Heart right ventricle (tissue), 16 donors: ENCODE measurements at regions of chr15 and their contacts with region 1.

Region 1: DNA sequence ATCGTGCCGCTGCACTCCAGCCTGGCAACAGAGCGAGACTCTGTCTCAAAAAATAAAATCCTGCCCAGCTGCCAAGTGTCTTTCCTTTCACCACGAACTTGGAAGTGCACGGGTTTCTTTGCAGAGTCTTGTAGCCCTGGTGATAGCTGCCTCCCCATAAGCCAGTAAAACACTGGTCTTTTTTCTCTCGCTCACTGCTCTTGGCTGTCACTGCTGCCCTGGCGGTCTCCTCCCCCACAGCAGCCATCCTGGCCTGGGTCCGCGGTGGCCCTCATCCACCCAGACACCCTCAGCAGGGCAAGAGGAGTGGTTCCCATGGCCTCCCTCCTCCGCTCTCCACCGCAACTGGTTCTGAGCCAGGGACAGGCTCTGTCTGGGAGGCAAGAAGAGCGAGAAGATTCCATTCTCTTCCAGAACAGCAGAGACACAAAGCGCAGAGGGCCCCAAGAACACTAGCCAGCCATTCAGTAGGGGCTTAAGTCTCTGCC is 44.4 kb downstream of the KLHL25 start:
- DNase-seq: peak; percentile 68 to 80
- ATAC-seq: peak; percentile 59 to 81 (median 69)
- H3K4me3 ChIP-seq: peak overlapping the region in 5 of 10 donors; percentile 8 to 27 (median 26)
- H3K27ac ChIP-seq: peak overlapping the region; percentile 41 to 86 (median 72)
- H3K4me1 ChIP-seq: peaks cover 19 to 81% (median 56%) of the 10 kb centered on the region in 9 donors
- H3K27me3 ChIP-seq: no peaks in the 10 kb centered on the region
- CTCF ChIP-seq: no peak

Region 2: GRCh38 chr15:84980196-84981053 is 769.9 kb before region 1 on chr15:
- intact Hi-C with region 1: no loop called
- DNase-seq: peak; percentile 83 to 87
- ATAC-seq: peak; percentile 71 to 90 (median 81)
- H3K4me3 ChIP-seq: peak overlapping the region; percentile 62 to 96 (median 85)
- H3K27ac ChIP-seq: peak overlapping the region; percentile 91 to 98 (median 96)
- H3K4me1 ChIP-seq: peaks cover 6 to 54% (median 39%) of the 10 kb centered on the region in 9 donors
- H3K27me3 ChIP-seq: no peaks in the 10 kb centered on the region
- CTCF ChIP-seq: peak in 2 of 9 donors; percentile 8 to 20

Region 3: GRCh38 chr15:85607842-85608241 is 142.5 kb before region 1 on chr15:
- intact Hi-C with region 1: loop called in 1 of 10 experiments (anchors 5 kb)
- DNase-seq: peak in 1 of 2 donors; percentile 65
- ATAC-seq: peak in 7 of 8 donors; percentile 53 to 89 (median 88)
- H3K4me3 ChIP-seq: no peak overlapping the region
- H3K27ac ChIP-seq: peak overlapping the region in 9 of 10 donors; percentile 41 to 87 (median 67)
- H3K4me1 ChIP-seq: peaks cover 9 to 77% (median 56%) of the 10 kb centered on the region in 9 donors
- H3K27me3 ChIP-seq: no peaks in the 10 kb centered on the region
- CTCF ChIP-seq: no peak

Region 4: DNA sequence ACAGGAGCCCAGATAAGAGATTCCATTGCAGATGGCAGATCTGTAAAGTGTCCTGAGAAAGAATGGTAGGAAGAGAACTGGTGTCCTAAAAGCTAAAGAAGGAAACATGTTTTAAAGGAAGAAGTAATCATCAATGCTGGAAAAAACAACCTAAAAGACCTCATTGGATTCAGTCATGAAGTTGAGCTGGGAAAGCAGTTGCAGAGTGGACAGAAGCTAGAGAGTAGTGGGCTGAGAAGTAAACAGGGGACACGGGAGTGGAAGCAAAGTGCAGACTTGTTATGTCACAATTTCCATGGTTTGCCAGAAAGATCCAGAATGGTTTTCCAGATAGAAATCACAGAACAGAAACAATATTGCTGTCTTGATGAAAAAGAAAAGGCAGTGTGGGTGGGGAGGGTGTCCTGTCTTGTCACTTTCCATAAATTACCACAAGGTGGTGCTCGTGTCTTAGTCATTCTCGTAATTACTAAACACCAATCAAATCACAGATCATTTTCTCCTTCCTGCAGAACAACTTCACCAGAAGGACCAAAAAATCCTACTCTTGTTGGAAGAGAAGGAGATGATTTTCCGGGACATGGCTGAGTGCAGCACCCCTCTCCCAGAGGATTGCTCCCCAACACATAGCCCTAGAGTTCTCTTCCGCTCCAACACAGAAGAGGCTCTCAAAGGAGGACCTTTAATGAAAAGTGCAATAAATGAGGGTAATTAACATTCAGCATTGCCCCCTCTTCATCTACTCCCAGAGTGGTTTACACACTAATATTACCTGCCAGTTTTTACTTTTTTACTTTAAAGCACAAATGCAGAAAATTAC is 20.2 kb before region 1 on chr15:
- intact Hi-C with region 1: loop called in 2 of 10 experiments (anchors 1 to 2 kb)
- DNase-seq: peak in 1 of 2 donors; percentile 60
- ATAC-seq: peak; percentile 35 to 74 (median 56)
- H3K4me3 ChIP-seq: no peak overlapping the region
- H3K27ac ChIP-seq: peak overlapping the region in 4 of 10 donors; percentile 5 to 78 (median 38)
- H3K4me1 ChIP-seq: peaks cover 0 to 34% (median 22%) of the 10 kb centered on the region in 9 donors
- H3K27me3 ChIP-seq: no peaks in the 10 kb centered on the region
- CTCF ChIP-seq: peak; percentile 54 to 81 (median 75)

Region 5: DNA sequence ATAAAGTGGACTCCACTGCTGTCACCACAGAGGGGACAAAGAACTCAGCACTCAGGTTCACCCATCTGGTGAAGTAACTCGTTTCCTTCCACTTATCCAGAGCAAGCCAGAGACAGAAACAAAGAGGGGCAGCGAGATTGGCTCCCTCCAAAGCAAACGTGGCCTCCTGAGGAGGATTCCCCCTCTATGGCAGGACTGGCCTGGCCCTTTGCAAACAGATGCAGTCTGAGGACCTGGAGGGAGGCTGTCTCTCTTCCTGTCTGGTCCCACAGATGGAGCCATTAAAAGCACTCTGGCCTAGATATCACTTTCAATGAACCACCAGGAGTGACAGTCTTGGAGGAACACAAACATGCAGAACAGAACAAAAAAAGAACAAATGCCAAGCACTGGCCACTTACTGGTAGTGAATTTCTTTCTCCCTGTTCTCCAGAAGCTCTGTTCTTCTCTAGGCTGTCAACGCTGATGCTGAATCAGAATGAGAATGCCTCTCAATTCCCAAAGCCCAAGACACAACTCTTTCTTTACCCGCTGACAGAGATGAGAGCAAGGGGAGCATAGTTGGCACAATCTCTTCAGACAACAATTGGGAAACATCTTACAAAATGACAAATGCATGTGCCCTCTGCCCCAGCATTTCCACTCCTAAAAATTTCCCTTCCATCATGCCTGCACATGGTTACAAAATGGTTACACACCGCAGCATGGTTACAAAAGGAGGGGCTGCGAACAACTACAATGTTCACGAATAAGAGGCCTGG is 30.0 kb after region 1 on chr15:
- intact Hi-C with region 1: loop called in 2 of 10 experiments (anchors 5 kb)
- DNase-seq: no peak
- ATAC-seq: no peak
- H3K4me3 ChIP-seq: no peak overlapping the region
- H3K27ac ChIP-seq: no peak overlapping the region
- H3K4me1 ChIP-seq: peaks cover 3 to 56% (median 36%) of the 10 kb centered on the region in 9 donors
- H3K27me3 ChIP-seq: no peaks in the 10 kb centered on the region
- CTCF ChIP-seq: no peak

Region 6: GRCh38 chr15:85785887-85786780 is 35.8 kb after region 1 on chr15:
- intact Hi-C with region 1: loop called in 3 of 10 experiments (anchors 5 kb)
- DNase-seq: peak; percentile 40 to 52
- ATAC-seq: peak; percentile 44 to 89 (median 76)
- H3K4me3 ChIP-seq: peak overlapping the region in 1 of 10 donors; percentile 4
- H3K27ac ChIP-seq: peak overlapping the region in 9 of 10 donors; percentile 1 to 58 (median 43)
- H3K4me1 ChIP-seq: peaks cover 9 to 32% (median 25%) of the 10 kb centered on the region in 9 donors
- H3K27me3 ChIP-seq: no peaks in the 10 kb centered on the region
- CTCF ChIP-seq: no peak

Region 7: DNA sequence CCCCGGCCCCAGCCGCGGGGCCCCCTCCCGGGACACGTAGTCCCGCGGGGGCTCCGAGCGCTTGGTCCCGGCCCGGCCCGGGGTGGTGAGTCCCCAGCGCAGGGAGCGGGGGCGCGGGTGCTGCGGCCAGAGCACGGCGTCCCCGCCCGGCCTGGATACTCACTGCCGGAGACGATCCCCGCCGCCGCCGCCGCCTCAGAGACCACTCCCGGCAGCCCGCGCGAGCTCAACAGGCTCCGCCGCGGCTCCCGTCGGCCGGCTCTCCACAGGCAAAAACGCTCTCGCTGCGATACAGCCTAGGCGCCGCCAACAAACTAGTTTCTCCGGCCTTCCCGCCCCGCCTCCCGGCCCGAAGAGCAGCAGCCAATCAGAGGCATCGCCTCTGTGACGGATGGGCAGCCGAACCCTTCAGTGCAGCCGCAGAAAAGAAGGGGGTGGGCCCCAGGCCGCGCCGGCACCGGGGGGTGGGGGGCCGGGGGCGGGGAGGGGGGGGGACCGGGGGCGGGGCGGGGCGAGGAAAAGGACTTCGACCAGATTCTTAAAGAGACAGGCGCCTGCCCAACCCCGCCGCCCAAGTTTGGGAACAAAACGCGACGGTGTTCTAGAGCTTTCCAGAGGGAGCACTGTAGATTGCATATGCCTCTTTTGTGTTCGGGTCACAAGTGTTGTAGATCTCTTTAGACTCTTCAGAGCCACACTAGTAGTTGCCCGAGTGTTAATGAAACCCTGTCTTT is 44.4 kb after region 1 on chr15 and contains the start of gene KLHL25:
- intact Hi-C with region 1: loop called in 3 of 10 experiments (anchors 5 kb)
- DNase-seq: peak; percentile 94 to 95
- ATAC-seq: peak; percentile 96 to 98 (median 98)
- H3K4me3 ChIP-seq: peak within 1 kb of the TSS; percentile 73 to 98 (median 89)
- H3K27ac ChIP-seq: peak within 1 kb of the TSS; percentile 52 to 95 (median 90)
- H3K4me1 ChIP-seq: peaks cover 0 to 29% (median 24%) of the 10 kb centered on the region in 9 donors
- H3K27me3 ChIP-seq: peaks cover 0 to 9% (median 0%) of the 10 kb centered on the region in 7 donors
- CTCF ChIP-seq: no peak
- total RNA-seq, gene KLHL25: 1.9 to 4.6 (median 3.2) TPM

Region 8: GRCh38 chr15:85840065-85840801 is 89.9 kb after region 1 on chr15:
- intact Hi-C with region 1: loop called in 1 of 10 experiments (anchors 5 kb)
- DNase-seq: peak; percentile 77 to 85
- ATAC-seq: peak; percentile 89 to 95 (median 94)
- H3K4me3 ChIP-seq: peak overlapping the region in 8 of 10 donors; percentile 3 to 45 (median 38)
- H3K27ac ChIP-seq: no peak overlapping the region
- H3K4me1 ChIP-seq: peaks cover 0 to 16% (median 9%) of the 10 kb centered on the region in 9 donors
- H3K27me3 ChIP-seq: peaks cover 0 to 8% (median 3%) of the 10 kb centered on the region in 7 donors
- CTCF ChIP-seq: peak; percentile 82 to 98 (median 93)